CD4-positive, alpha-beta memory T cell (primary cell): ENCODE measurements at regions of chr1 and their contacts with region 1.

Region 1: GRCh38 chr1:110034451-110035235 is at the start of gene STRIP1:
- DNase-seq: peak; percentile 93 to 95 (median 95)
- H3K4me3 ChIP-seq: peak within 1 kb of the TSS; percentile 74 to 80
- H3K4me3 Mint-ChIP-seq: peak within 1 kb of the TSS; percentile 93 to 98 (median 97)
- H3K27ac ChIP-seq: peak within 1 kb of the TSS; percentile 97
- H3K27ac Mint-ChIP-seq: peak within 1 kb of the TSS; percentile 83 to 98 (median 95)
- H3K4me1 ChIP-seq: peaks cover 44% of the 10 kb centered on the region
- H3K4me1 Mint-ChIP-seq: peaks cover 34 to 66% (median 48%) of the 10 kb centered on the region in 4 donors
- H3K27me3 ChIP-seq: no peaks in the 10 kb centered on the region
- H3K27me3 Mint-ChIP-seq: no peaks in the 10 kb centered on the region
- total RNA-seq, gene STRIP1: 73.3 TPM

Region 2: DNA sequence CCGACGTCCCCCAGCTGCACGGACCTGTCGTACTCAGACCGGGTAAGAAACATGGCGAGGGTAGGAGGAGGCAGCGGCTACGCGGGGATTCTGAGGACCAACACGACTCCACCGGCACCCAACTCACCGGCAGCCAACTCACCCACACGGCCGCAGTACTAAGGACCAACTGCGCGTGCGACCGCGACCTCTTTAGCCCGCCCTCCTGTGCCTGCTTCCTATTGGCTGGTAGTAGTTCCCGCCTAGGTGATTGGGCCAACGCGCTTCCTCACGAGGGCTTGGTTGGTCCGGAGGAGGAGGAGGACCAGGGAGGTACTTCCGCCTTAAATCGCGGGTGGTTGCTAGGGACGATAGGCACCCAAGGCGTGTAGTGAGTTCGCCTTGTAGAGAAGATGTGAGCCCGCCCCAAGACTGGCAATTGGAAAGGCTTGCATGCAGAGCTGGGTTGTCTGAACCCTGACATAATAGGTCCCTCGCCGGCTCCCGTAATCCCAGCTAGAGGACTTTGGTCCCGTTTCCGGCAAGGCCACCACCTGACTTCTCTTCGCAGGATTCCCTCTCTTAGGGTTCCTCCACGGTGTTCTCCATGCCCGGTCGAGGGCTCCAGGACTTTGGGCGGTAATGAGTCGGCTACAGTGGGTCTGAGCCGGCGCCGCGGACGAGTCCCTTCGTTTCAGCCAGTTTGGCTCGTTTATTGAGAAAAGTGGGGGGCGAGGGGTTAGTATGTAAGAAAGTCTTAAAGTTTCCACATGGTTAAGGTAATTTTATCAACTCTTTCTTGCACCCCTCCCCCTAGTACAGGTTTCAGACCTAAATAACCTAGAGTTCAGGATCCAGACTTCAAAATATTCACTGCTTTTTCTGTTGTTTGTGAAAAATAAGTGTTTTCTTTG is 608.1 kb before region 1 on chr1 and contains the start of gene PSMA5:
- CTCF ChIA-PET with region 1: no interaction called
- POLR2A ChIA-PET with region 1: interaction called, 3 read pairs
- intact Hi-C with region 1: loop called (anchors 5 kb)
- DNase-seq: peak; percentile 93 to 99 (median 96)
- H3K4me3 ChIP-seq: peak within 1 kb of the TSS; percentile 96 to 98
- H3K4me3 Mint-ChIP-seq: peak within 1 kb of the TSS; percentile 94 to 99 (median 98)
- H3K27ac ChIP-seq: peak within 1 kb of the TSS; percentile 87
- H3K27ac Mint-ChIP-seq: peak within 1 kb of the TSS; percentile 90 to 99 (median 98)
- H3K4me1 ChIP-seq: peaks cover 44% of the 10 kb centered on the region
- H3K4me1 Mint-ChIP-seq: peaks cover 22 to 50% (median 37%) of the 10 kb centered on the region in 4 donors
- H3K27me3 ChIP-seq: no peaks in the 10 kb centered on the region
- H3K27me3 Mint-ChIP-seq: no peaks in the 10 kb centered on the region
- total RNA-seq, gene PSMA5: 87.7 to 90.2 TPM

Region 3: DNA sequence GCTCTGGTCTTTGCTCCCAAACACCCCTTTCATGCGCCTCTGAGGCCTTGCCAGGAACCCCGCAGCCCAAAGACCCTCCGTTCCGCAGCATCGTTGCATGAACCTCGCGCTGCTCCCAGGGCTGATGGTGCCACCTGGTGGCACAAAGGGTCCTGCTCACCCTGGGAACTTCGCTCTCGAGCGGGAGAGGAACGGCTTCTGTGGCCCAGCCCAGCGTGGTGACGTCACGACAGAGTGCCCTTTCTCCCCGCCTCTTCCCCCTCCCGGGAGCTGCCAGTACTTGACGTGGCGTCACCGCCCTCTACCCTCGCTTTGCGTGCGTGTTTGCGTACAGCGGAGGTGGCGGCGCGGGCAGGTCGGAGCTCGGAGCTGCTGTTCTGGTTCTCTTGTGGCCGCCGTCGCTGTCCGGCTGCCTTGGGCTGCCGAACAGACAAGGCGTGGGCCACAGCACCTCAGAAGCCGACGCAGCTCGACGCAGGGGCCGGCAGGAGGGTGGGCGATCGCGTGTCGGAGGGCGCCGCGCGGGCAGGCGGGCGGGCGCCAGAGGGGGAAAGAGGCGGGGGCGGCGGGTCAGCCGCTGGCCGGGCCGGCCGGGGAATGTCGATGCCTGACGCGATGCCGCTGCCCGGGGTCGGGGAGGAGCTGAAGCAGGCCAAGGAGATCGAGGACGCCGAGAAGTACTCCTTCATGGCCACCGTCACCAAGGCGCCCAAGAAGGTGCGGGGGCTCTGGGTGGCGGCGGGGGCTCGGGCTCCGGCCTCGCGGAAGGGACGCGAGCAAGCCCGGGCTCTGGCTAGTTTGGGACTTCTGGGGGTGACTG is 50.0 kb before region 1 on chr1 and contains the start of gene AHCYL1:
- CTCF ChIA-PET with region 1: interaction called, 15 read pairs
- POLR2A ChIA-PET with region 1: interaction called, 7 read pairs
- intact Hi-C with region 1: loop called (anchors 1 kb)
- DNase-seq: peak; percentile 98 to 99 (median 99)
- H3K4me3 ChIP-seq: peak within 1 kb of the TSS; percentile 58 to 75
- H3K4me3 Mint-ChIP-seq: peak within 1 kb of the TSS; percentile 97 to 100 (median 99)
- H3K27ac ChIP-seq: peak within 1 kb of the TSS; percentile 82
- H3K27ac Mint-ChIP-seq: peak within 1 kb of the TSS; percentile 96 to 99 (median 99)
- H3K4me1 ChIP-seq: peaks cover 31% of the 10 kb centered on the region
- H3K4me1 Mint-ChIP-seq: peaks cover 25 to 48% (median 35%) of the 10 kb centered on the region in 4 donors
- H3K27me3 ChIP-seq: no peaks in the 10 kb centered on the region
- H3K27me3 Mint-ChIP-seq: no peaks in the 10 kb centered on the region
- total RNA-seq, gene AHCYL1: 44.2 to 45.1 TPM

Region 4: GRCh38 chr1:110053557-110054428 is 19.1 kb after region 1 on chr1:
- CTCF ChIA-PET with region 1: interaction called, 120 read pairs
- POLR2A ChIA-PET with region 1: interaction called, 33 read pairs
- intact Hi-C with region 1: no loop called
- DNase-seq: peak; percentile 36 to 60 (median 53)
- H3K4me3 ChIP-seq: no peak overlapping the region
- H3K4me3 Mint-ChIP-seq: no peak overlapping the region
- H3K27ac ChIP-seq: no peak overlapping the region
- H3K27ac Mint-ChIP-seq: peak overlapping the region in 3 of 7 donors; percentile 37 to 83 (median 49)
- H3K4me1 ChIP-seq: no peaks in the 10 kb centered on the region
- H3K4me1 Mint-ChIP-seq: peaks cover 1 to 9% (median 5%) of the 10 kb centered on the region in 4 donors
- H3K27me3 ChIP-seq: no peaks in the 10 kb centered on the region
- H3K27me3 Mint-ChIP-seq: no peaks in the 10 kb centered on the region

Region 5: DNA sequence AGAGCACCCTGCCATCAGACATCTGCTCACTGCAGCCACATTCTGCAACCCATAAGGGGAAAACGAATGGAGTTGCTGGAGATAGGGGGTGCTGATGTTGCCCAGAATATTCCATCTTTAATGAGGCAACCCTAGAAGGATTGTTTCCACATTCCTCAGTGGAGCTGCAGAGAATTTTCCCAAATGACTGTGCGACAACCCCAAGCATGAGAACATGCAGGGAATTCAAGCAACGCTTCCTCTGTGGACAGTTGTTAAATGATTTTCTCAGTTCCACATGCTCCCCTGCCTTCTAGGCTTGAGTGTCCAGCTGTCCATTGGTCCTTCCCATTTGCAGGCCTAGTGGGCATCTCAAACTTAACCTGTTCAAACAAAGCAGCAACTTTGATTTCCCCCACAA is 57.1 kb after region 1 on chr1:
- CTCF ChIA-PET with region 1: no interaction called
- POLR2A ChIA-PET with region 1: no interaction called
- intact Hi-C with region 1: no loop called
- DNase-seq: no peak
- H3K4me3 ChIP-seq: no peak overlapping the region
- H3K4me3 Mint-ChIP-seq: no peak overlapping the region
- H3K27ac ChIP-seq: no peak overlapping the region
- H3K27ac Mint-ChIP-seq: no peak overlapping the region
- H3K4me1 ChIP-seq: no peaks in the 10 kb centered on the region
- H3K4me1 Mint-ChIP-seq: peaks cover 0 to 4% (median 1%) of the 10 kb centered on the region in 4 donors
- H3K27me3 ChIP-seq: no peaks in the 10 kb centered on the region
- H3K27me3 Mint-ChIP-seq: peaks cover 13 to 27% of the 10 kb centered on the region in 2 donors

Region 6: GRCh38 chr1:110407260-110408210 is 372.9 kb after region 1 on chr1 and contains the start of gene LAMTOR5:
- CTCF ChIA-PET with region 1: no interaction called
- POLR2A ChIA-PET with region 1: interaction called, 3 read pairs
- intact Hi-C with region 1: loop called (anchors 1 kb)
- DNase-seq: peak; percentile 89 to 91 (median 90)
- H3K4me3 ChIP-seq: peak within 1 kb of the TSS; percentile 83 to 98
- H3K4me3 Mint-ChIP-seq: peak within 1 kb of the TSS; percentile 96 to 100 (median 99)
- H3K27ac ChIP-seq: peak within 1 kb of the TSS; percentile 87
- H3K27ac Mint-ChIP-seq: peak within 1 kb of the TSS; percentile 95 to 100 (median 99)
- H3K4me1 ChIP-seq: peaks cover 28% of the 10 kb centered on the region
- H3K4me1 Mint-ChIP-seq: peaks cover 17 to 34% (median 24%) of the 10 kb centered on the region in 4 donors
- H3K27me3 ChIP-seq: no peaks in the 10 kb centered on the region
- H3K27me3 Mint-ChIP-seq: no peaks in the 10 kb centered on the region
- total RNA-seq, gene LAMTOR5: 64.5 to 69.6 TPM

Region 7: GRCh38 chr1:110872745-110873720 is 838.4 kb after region 1 on chr1 and contains the start of gene CD53:
- CTCF ChIA-PET with region 1: no interaction called
- POLR2A ChIA-PET with region 1: no interaction called
- intact Hi-C with region 1: loop called (anchors 2 kb)
- DNase-seq: peak; percentile 70 to 82 (median 73)
- H3K4me3 ChIP-seq: peak within 1 kb of the TSS; percentile 79 to 92
- H3K4me3 Mint-ChIP-seq: peak within 1 kb of the TSS; percentile 94 to 100 (median 98)
- H3K27ac ChIP-seq: peak within 1 kb of the TSS; percentile 88
- H3K27ac Mint-ChIP-seq: peak within 1 kb of the TSS; percentile 93 to 99 (median 98)
- H3K4me1 ChIP-seq: peaks cover 54% of the 10 kb centered on the region
- H3K4me1 Mint-ChIP-seq: peaks cover 43 to 79% (median 52%) of the 10 kb centered on the region in 4 donors
- H3K27me3 ChIP-seq: no peaks in the 10 kb centered on the region
- H3K27me3 Mint-ChIP-seq: no peaks in the 10 kb centered on the region
- total RNA-seq, gene CD53: 337 to 338 TPM